ENCODE measurements at regions of chr1 and their contacts with region 1.

Region 1: DNA sequence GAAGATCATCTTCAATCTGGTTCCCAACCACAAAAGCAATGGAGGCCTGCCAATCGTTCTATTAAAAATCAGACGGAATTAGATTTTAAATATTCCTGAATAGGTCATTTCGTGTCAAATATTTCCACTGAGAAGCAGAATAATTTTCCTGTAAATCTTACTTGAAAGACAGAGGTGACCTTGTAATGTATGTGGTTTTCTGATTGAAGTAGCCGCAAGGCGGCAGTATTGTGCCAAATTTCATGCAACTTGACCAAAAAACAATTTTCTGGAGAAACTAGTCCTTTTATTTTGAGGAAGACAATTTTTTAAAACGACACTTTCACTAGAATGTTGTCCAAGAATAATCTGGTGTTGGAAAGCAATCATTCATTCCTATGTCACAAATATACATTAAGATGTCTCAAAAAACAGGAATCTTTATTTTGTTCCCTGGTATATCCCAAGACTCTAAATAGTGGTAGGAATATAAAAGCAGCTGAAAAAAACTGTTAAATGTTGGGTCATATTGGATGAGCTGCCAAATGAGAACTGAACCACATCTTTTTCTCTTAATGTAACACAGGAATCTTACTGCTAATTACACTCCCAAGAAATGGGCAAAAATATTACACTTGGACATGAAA is 33.6 kb downstream of the SPAG17 start:
- DNase-seq: peak in 1 of 2 experiments; percentile 41
- H3K4me3 ChIP-seq: no peak overlapping the region
- H3K4me3 Mint-ChIP-seq: no peak overlapping the region
- H3K27ac Mint-ChIP-seq: no peak overlapping the region
- H3K4me1 ChIP-seq: no peaks in the 10 kb centered on the region
- H3K4me1 Mint-ChIP-seq: no peaks in the 10 kb centered on the region
- H3K27me3 ChIP-seq: no peaks in the 10 kb centered on the region
- H3K27me3 Mint-ChIP-seq: peaks cover 4% of the 10 kb centered on the region
- CTCF ChIP-seq: peak; percentile 35 to 57

Region 2: DNA sequence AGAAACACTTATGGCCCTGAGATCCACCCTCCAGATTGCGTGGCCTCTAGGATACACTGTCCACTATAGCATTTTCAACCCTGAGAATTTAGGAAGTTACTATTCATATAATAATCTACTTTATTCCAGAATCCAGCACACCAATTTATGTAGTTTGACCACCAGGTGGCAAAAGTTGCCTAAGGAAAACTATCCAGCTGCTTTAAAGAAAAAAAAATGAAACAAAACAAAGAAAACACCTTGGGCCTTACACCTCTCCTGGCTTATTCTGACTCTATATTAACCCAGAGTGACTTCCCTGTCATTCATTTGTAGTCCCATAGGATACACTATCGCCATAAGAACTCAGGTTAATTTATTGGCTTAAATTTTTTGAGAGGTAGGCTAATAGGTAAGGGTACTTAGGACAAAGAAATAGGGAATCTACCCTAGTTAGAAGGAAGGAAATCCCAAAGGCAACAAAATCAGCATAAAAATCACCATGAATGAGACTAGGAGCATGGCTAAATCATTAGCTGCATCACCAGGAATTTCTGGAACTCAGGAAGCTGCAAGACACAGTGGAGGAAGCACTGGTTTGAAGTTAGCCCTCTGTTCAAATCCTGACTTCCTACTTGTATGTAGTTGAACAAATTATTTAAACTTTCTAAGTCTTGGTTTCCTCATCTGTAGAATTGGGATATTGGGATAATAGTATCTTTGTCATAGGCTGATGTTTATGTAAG is 73.9 kb before region 1 on chr1:
- CTCF ChIA-PET with region 1: no interaction called
- POLR2A ChIA-PET with region 1: no interaction called
- intact Hi-C with region 1: loop called (anchors 1 kb)
- DNase-seq: peak in 1 of 2 experiments; percentile 20
- H3K4me3 ChIP-seq: no peak overlapping the region
- H3K4me3 Mint-ChIP-seq: no peak overlapping the region
- H3K27ac Mint-ChIP-seq: no peak overlapping the region
- H3K4me1 ChIP-seq: no peaks in the 10 kb centered on the region
- H3K4me1 Mint-ChIP-seq: peaks cover 9% of the 10 kb centered on the region
- H3K27me3 ChIP-seq: no peaks in the 10 kb centered on the region
- H3K27me3 Mint-ChIP-seq: peaks cover 4% of the 10 kb centered on the region
- CTCF ChIP-seq: peak; percentile 27 to 32

Region 3: GRCh38 chr1:118113261-118113660 is 38.2 kb before region 1 on chr1:
- CTCF ChIA-PET with region 1: no interaction called
- POLR2A ChIA-PET with region 1: no interaction called
- intact Hi-C with region 1: no loop called
- DNase-seq: no peak
- H3K4me3 ChIP-seq: no peak overlapping the region
- H3K4me3 Mint-ChIP-seq: no peak overlapping the region
- H3K27ac Mint-ChIP-seq: no peak overlapping the region
- H3K4me1 ChIP-seq: peaks cover 5% of the 10 kb centered on the region
- H3K4me1 Mint-ChIP-seq: peaks cover 2% of the 10 kb centered on the region
- H3K27me3 ChIP-seq: no peaks in the 10 kb centered on the region
- H3K27me3 Mint-ChIP-seq: no peaks in the 10 kb centered on the region
- CTCF ChIP-seq: no peak

Region 4: GRCh38 chr1:118123116-118123839 is 28.1 kb before region 1 on chr1:
- CTCF ChIA-PET with region 1: no interaction called
- POLR2A ChIA-PET with region 1: no interaction called
- intact Hi-C with region 1: no loop called
- DNase-seq: no peak
- H3K4me3 ChIP-seq: no peak overlapping the region
- H3K4me3 Mint-ChIP-seq: no peak overlapping the region
- H3K27ac Mint-ChIP-seq: no peak overlapping the region
- H3K4me1 ChIP-seq: peaks cover 10% of the 10 kb centered on the region
- H3K4me1 Mint-ChIP-seq: peaks cover 12% of the 10 kb centered on the region
- H3K27me3 ChIP-seq: no peaks in the 10 kb centered on the region
- H3K27me3 Mint-ChIP-seq: no peaks in the 10 kb centered on the region
- CTCF ChIP-seq: no peak

Region 5: GRCh38 chr1:118190561-118190960 is 39.1 kb after region 1 on chr1:
- CTCF ChIA-PET with region 1: no interaction called
- POLR2A ChIA-PET with region 1: no interaction called
- intact Hi-C with region 1: no loop called
- DNase-seq: no peak
- H3K4me3 ChIP-seq: no peak overlapping the region
- H3K4me3 Mint-ChIP-seq: no peak overlapping the region
- H3K27ac Mint-ChIP-seq: no peak overlapping the region
- H3K4me1 ChIP-seq: no peaks in the 10 kb centered on the region
- H3K4me1 Mint-ChIP-seq: no peaks in the 10 kb centered on the region
- H3K27me3 ChIP-seq: no peaks in the 10 kb centered on the region
- H3K27me3 Mint-ChIP-seq: no peaks in the 10 kb centered on the region
- CTCF ChIP-seq: no peak

Region 6: GRCh38 chr1:118247593-118247992 is 96.2 kb after region 1 on chr1:
- CTCF ChIA-PET with region 1: no interaction called
- POLR2A ChIA-PET with region 1: no interaction called
- intact Hi-C with region 1: loop called (anchors 1 kb)
- DNase-seq: peak in 1 of 2 experiments; percentile 7
- H3K4me3 ChIP-seq: no peak overlapping the region
- H3K4me3 Mint-ChIP-seq: no peak overlapping the region
- H3K27ac Mint-ChIP-seq: no peak overlapping the region
- H3K4me1 ChIP-seq: no peaks in the 10 kb centered on the region
- H3K4me1 Mint-ChIP-seq: no peaks in the 10 kb centered on the region
- H3K27me3 ChIP-seq: no peaks in the 10 kb centered on the region
- H3K27me3 Mint-ChIP-seq: no peaks in the 10 kb centered on the region
- CTCF ChIP-seq: peak in 1 of 2 experiments; percentile 20

Region 7: GRCh38 chr1:118716782-118717181 is 565.4 kb after region 1 on chr1:
- CTCF ChIA-PET with region 1: no interaction called
- POLR2A ChIA-PET with region 1: no interaction called
- intact Hi-C with region 1: loop called (anchors 2 kb)
- DNase-seq: no peak
- H3K4me3 ChIP-seq: no peak overlapping the region
- H3K4me3 Mint-ChIP-seq: no peak overlapping the region
- H3K27ac Mint-ChIP-seq: no peak overlapping the region
- H3K4me1 ChIP-seq: no peaks in the 10 kb centered on the region
- H3K4me1 Mint-ChIP-seq: no peaks in the 10 kb centered on the region
- H3K27me3 ChIP-seq: no peaks in the 10 kb centered on the region
- H3K27me3 Mint-ChIP-seq: no peaks in the 10 kb centered on the region
- CTCF ChIP-seq: peak in 1 of 2 experiments; percentile 32

Region 8: GRCh38 chr1:119008483-119009311 is 857.3 kb after region 1 on chr1:
- CTCF ChIA-PET with region 1: no interaction called
- POLR2A ChIA-PET with region 1: no interaction called
- intact Hi-C with region 1: loop called (anchors 5 kb)
- DNase-seq: peak in 1 of 2 experiments; percentile 38
- H3K4me3 ChIP-seq: no peak overlapping the region
- H3K4me3 Mint-ChIP-seq: no peak overlapping the region
- H3K27ac Mint-ChIP-seq: no peak overlapping the region
- H3K4me1 ChIP-seq: no peaks in the 10 kb centered on the region
- H3K4me1 Mint-ChIP-seq: no peaks in the 10 kb centered on the region
- H3K27me3 ChIP-seq: no peaks in the 10 kb centered on the region
- H3K27me3 Mint-ChIP-seq: no peaks in the 10 kb centered on the region
- CTCF ChIP-seq: peak; percentile 2 to 28